ENCODE measurements at regions of chr19 and their contacts with region 1.

Region 1: GRCh38 chr19:35375505-35376307 is 4.8 kb downstream of the GPR42 start:
- DNase-seq: no peak
- ATAC-seq: no peak
- H3K4me3 ChIP-seq: no peak overlapping the region
- H3K27ac ChIP-seq: no peak overlapping the region
- H3K4me1 ChIP-seq: no peaks in the 10 kb centered on the region
- H3K27me3 ChIP-seq: peaks cover 0 to 2% (median 0%) of the 10 kb centered on the region in 3 donors
- CTCF ChIP-seq: no peak

Region 2: DNA sequence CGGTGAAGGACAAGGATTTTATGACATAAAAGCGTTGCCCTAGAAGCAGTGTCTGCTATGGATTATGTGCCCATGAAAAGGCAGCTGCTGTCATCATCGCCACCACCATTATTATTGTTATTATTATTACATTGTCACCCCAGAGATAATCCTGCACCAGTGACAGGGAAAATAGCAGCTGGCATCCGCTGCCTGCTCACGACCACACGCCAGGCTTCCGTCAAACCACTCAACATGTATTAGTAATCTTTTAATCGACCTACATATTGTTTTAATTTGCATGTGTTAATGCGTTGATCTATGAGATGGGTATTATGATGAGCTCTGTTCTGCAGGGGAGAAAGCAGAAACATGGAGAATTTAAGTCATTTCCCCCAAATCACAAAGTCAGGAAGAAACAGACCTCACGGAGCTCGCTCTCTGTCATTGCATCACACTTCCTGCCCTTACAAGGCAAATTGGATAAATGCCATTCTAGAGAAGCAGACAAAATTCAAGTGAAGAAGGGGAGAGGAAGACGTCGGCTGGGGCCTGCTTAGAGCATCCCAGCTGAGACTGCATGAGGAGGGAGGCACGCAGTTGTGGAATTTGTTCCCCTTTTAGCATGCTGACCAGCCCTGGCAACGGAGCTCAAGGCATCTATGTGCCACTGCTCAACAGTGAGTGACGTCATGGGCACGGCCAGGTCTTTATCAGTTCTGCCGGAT is 17.7 kb before region 1 on chr19 and contains the start of gene FFAR3:
- intact Hi-C with region 1: loop called (anchors 1 to 2 kb)
- DNase-seq: peak in 1 of 2 donors; percentile 66
- ATAC-seq: peak in 1 of 4 donors; percentile 10
- H3K4me3 ChIP-seq: no peak within 1 kb of the TSS
- H3K27ac ChIP-seq: no peak within 1 kb of the TSS
- H3K4me1 ChIP-seq: no peaks in the 10 kb centered on the region
- H3K27me3 ChIP-seq: peaks cover 0 to 24% (median 3%) of the 10 kb centered on the region in 3 donors
- CTCF ChIP-seq: no peak
- total RNA-seq, gene FFAR3: 0.17 to 0.22 TPM in 2 of 4 donors, not detected in the others

Region 3: GRCh38 chr19:35429698-35430408 is 54.1 kb after region 1 on chr19:
- intact Hi-C with region 1: no loop called
- DNase-seq: no peak
- ATAC-seq: no peak
- H3K4me3 ChIP-seq: no peak overlapping the region
- H3K27ac ChIP-seq: no peak overlapping the region
- H3K4me1 ChIP-seq: peaks cover 2% of the 10 kb centered on the region
- H3K27me3 ChIP-seq: no peaks in the 10 kb centered on the region
- CTCF ChIP-seq: no peak

Measured in psoas muscle (tissue), 8 donors.